ENCODE measurements at regions of chr11 and their contacts with region 1.

Region 1: DNA sequence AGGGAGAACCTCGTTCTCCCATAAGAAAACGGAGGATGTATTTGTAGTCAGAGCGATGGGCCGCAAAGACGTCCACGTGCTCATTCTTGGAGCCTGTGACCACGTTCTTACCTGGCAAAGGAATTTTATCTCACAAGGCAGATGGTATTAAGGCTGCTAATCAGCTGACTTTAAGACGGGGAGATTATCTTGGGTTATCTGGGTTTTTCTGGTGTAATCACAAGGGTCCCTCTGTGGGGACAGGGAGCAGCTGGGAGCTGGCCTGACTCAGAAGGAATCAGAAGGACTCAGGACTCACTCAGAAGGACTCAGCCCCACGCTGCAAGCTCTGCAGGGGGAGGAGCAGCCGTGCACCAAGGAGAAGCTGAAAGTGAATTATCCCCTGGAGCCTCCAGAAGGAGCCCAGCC is 7.5 kb upstream of the SIGIRR start:
- DNase-seq: no peak
- H3K4me3 ChIP-seq: no peak overlapping the region
- H3K27ac ChIP-seq: no peak overlapping the region
- H3K27me3 ChIP-seq: peaks cover 46% of the 10 kb centered on the region
- CTCF ChIP-seq: no peak

Region 2: DNA sequence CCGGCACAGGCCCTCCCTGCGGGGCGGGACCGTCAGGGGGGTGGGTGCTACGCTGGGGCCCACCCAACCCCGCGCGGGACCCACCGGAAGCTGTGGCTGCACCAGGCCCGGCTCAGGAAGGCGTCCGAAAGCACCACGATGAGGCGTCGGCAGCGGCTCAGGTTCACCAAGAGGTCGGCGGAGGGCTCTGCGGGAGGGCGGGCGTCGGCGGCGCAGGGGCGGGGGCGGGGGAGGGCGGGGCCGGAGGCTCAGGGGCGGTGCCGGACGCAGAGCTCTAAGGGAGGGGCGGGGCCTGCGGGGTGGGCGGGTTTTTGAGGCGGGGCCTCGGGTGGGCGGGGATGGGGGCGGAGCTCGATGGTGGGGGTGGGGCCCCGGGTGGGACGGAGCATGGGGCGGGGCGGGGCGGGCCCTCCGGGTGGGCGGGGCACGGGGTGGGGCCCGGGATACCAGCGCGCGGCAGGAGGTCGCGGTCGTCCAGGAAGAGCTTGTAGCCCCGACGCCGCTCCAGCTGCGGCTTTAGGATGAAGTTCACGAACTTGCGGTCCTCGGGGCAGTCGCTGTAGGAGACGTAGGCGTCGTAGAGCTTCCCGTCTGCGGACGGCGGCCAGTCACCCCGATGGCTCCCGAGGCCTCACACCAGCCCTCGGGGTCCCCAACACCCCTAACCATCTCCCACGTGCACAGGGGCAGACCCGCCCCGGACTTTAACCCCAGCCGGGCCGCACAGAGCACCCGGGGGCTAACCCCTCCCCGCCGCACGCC is 15.1 kb before region 1 on chr11:
- CTCF ChIA-PET with region 1: no interaction called
- POLR2A ChIA-PET with region 1: no interaction called
- DNase-seq: peak; percentile 41
- H3K4me3 ChIP-seq: peak overlapping the region; percentile 68
- H3K27ac ChIP-seq: no peak overlapping the region
- H3K27me3 ChIP-seq: no peaks in the 10 kb centered on the region
- CTCF ChIP-seq: no peak

Region 3: DNA sequence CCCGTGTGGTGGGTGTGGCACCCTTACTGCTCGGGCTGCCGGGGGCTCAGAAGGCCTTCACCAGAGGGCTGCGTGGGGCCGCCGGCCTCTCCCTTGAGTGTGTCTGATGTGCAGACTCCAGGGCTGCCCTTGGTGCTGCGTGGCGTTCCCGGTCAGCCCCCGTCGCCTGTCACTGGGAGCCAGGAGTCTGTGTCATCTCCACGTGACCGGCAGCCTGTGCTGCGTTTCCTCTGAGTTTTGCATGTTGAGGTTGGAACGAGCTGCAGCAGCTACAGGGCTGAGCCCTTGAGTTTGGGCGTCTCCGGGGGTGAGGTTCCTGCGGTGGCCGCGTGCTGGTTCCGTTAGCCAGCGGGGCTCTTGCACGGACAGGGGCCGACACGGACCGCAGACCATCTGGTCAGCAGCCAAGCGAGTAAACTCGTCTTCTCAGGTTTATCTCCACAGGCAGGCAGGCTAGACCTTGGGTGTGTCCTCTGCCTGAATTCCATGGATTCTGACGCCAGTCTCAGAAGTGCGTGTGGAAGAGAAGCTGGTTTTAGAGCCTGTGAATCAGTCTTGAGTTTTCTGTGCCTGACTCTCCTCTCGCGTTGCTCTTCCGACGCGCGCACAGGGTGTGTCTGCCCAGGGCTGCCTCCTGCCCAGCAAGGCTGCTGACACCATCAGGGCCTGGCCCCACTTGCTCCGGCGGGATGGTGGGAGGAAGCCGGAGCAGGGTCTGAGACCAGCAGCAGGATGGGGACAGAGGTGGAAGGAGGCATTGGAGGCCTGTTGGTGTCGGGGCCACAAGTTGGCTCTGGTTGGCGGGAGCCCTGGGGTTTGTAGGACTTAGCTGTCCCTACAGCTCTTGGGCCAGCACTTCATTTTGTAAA is 38.3 kb after region 1 on chr11:
- CTCF ChIA-PET with region 1: interaction called, 11 read pairs
- POLR2A ChIA-PET with region 1: no interaction called
- DNase-seq: no peak
- H3K4me3 ChIP-seq: no peak overlapping the region
- H3K27ac ChIP-seq: no peak overlapping the region
- H3K27me3 ChIP-seq: no peaks in the 10 kb centered on the region
- CTCF ChIP-seq: no peak

Region 4: DNA sequence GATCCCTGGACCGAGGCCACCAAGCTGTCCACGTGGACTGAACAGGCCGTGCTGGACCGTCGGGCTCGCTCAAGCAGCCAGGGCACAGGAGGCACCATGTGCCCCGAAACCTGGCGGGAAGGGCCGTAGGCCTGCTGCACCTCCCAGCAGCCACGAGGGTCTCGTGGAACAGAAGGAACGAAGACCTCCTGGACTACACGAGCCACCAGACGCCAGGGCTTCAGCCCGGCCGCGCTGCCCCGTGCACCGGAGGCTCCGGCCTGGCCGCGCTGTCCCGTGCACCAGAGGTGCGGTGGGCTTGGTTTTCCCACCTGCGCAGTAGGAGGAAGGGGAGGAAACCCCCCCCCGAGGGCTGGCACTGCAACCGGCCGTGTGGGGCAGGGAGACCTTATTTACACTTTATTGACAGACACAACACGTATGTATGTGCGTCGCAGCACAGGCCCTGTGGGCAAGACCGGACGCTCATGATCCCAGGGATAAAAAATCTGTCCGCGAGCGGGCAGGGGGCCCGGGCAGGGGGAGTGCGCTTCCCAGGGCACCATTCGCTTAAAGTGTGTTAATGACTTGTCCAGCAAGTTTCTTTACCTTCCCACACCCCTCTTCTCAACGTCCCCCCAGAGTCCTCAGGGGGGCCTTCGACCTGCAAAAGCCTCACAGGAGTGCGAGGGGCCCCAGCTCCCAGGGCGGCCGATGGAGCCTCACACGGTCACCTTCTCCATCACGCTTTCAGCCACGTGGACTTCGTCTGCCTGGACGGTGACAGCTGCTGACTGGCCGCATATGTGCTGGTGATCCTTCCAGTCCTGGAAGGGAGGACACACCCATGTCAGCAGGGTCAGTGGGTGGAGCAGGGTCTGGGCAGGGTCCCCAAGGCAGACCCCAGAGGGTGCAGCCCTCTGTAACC is 221.8 kb after region 1 on chr11:
- CTCF ChIA-PET with region 1: no interaction called
- POLR2A ChIA-PET with region 1: interaction called, 10 read pairs
- DNase-seq: no peak
- H3K4me3 ChIP-seq: no peak overlapping the region
- H3K27ac ChIP-seq: no peak overlapping the region
- H3K27me3 ChIP-seq: peaks cover 8% of the 10 kb centered on the region
- CTCF ChIP-seq: no peak

Region 5: DNA sequence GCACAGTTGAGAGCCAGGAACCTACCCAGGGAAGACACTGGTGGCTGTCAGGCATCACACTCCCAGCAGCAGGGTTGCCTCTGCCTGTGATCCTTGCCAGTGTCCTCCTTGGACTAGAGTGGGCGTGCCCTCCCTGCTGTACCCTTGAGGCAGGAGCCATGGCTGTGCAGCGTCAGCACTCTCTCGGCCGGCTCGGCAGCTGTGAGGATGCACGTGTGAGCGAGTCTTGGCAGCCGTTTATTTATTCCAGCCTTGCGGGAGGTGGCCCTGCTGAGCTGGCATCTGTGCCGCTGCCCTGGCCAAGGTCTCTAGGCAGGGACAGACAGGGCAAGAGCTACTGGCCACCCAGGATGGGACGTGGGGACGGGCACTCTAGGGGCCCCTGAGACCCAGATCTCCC is 454.3 kb after region 1 on chr11:
- CTCF ChIA-PET with region 1: no interaction called
- POLR2A ChIA-PET with region 1: no interaction called
- DNase-seq: no peak
- H3K4me3 ChIP-seq: no peak overlapping the region
- H3K27ac ChIP-seq: no peak overlapping the region
- H3K27me3 ChIP-seq: no peaks in the 10 kb centered on the region
- CTCF ChIP-seq: no peak